ENCODE measurements at regions of chr11 and their contacts with region 1.

Region 1: DNA sequence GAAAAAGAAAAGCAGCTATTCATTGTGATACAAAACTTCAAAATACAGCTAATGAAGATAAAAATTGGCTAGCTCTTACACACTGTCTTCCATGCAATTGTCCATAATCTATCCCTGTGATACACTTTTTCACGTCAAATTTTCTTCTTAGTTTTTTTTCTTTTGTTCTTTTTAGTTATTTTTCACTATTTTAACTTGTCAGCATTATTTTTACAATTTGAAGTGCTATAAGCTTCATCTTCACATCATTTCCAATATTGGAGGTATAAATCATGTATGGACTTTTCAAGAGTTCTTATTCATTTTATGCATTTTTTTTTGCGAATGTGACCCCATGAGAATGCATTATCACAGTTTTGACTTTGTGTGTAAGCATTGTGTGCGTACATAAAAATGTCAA is 4.1 kb downstream of the OR5B17 start:
- DNase-seq: no peak
- H3K4me3 ChIP-seq: no peak overlapping the region
- H3K27ac ChIP-seq: no peak overlapping the region
- H3K4me1 ChIP-seq: no peaks in the 10 kb centered on the region
- H3K27me3 ChIP-seq: no peaks in the 10 kb centered on the region
- CTCF ChIP-seq: no peak
- EP300 ChIP-seq: no peak
- POLR2A ChIP-seq: no peak

Region 2: GRCh38 chr11:56659755-56660154 is 1695.0 kb before region 1 on chr11:
- intact Hi-C with region 1: loop called in 1 of 4 experiments (anchors 10 kb)
- DNase-seq: no peak
- H3K4me3 ChIP-seq: no peak overlapping the region
- H3K27ac ChIP-seq: no peak overlapping the region
- H3K4me1 ChIP-seq: no peaks in the 10 kb centered on the region
- H3K27me3 ChIP-seq: no peaks in the 10 kb centered on the region
- CTCF ChIP-seq: no peak
- EP300 ChIP-seq: no peak
- POLR2A ChIP-seq: no peak

Region 3: GRCh38 chr11:58254936-58255335 is 99.8 kb before region 1 on chr11:
- intact Hi-C with region 1: no loop called
- DNase-seq: no peak
- H3K4me3 ChIP-seq: no peak overlapping the region
- H3K27ac ChIP-seq: no peak overlapping the region
- H3K4me1 ChIP-seq: no peaks in the 10 kb centered on the region
- H3K27me3 ChIP-seq: no peaks in the 10 kb centered on the region
- CTCF ChIP-seq: no peak
- EP300 ChIP-seq: no peak
- POLR2A ChIP-seq: no peak

Region 4: GRCh38 chr11:58292017-58292416 is 62.7 kb before region 1 on chr11:
- intact Hi-C with region 1: no loop called
- DNase-seq: no peak
- H3K4me3 ChIP-seq: no peak overlapping the region
- H3K27ac ChIP-seq: no peak overlapping the region
- H3K4me1 ChIP-seq: no peaks in the 10 kb centered on the region
- H3K27me3 ChIP-seq: no peaks in the 10 kb centered on the region
- CTCF ChIP-seq: no peak
- EP300 ChIP-seq: no peak
- POLR2A ChIP-seq: no peak

Measured in ovary (tissue), 10 donors.